PC-3 (cell line): ENCODE measurements at regions of chr5 and their contacts with region 1.

Region 1: DNA sequence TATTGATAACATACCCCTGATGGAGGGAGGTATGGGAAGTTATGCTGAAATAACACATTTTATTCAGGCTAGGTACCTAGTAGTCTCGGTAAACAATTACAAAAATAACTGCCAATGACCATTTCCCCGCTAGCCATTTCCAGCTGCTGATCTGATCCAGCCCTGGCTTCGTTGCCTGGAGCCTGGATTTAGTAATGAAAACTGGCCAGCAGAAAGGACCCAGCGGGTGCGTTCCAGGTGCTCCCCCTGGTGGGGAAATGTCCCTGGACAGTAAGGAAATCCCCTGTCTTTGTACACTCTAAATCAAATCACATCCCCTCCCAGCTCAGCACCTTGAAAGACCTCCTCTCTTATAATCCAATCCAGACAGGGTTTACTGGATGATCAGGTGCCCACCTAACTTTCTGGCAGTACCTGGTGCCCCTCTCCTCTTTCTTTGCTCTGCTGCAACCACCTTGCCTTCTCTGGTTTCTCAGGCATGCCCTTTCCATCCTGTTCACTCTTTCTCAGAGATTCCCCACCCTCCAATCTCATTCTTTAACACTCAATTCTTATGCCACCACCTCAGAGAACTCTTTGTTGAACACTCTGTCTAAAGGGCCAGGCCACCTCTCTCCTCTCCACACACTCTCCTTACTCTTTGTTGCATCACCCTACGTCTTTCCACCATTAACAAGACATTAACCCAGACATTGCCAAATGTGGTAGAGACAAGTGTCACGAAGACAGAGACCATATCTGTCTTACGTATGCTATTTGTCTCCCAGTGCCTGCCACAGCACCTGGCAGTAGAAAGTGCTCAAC is 50.1 kb upstream of the SMAD5 start:
- DNase-seq: peak; percentile 71
- ATAC-seq: peak; percentile 89
- H3K4me3 ChIP-seq: no peak overlapping the region
- H3K27ac ChIP-seq: no peak overlapping the region
- H3K4me1 ChIP-seq: no peaks in the 10 kb centered on the region
- H3K27me3 ChIP-seq: peaks cover 6% of the 10 kb centered on the region; the same call in 1 of the 2 replicates
- CTCF ChIP-seq: peak; percentile 76

Region 2: GRCh38 chr5:135615581-135616260 is 466.9 kb before region 1 on chr5:
- CTCF ChIA-PET with region 1: no interaction called
- POLR2A ChIA-PET with region 1: no interaction called
- intact Hi-C with region 1: no loop called
- DNase-seq: no peak
- ATAC-seq: no peak
- H3K4me3 ChIP-seq: no peak overlapping the region
- H3K27ac ChIP-seq: no peak overlapping the region
- H3K4me1 ChIP-seq: no peaks in the 10 kb centered on the region
- H3K27me3 ChIP-seq: peaks cover 16% of the 10 kb centered on the region
- CTCF ChIP-seq: no peak

Region 3: GRCh38 chr5:135887351-135887864 is 195.2 kb before region 1 on chr5:
- CTCF ChIA-PET with region 1: no interaction called
- POLR2A ChIA-PET with region 1: no interaction called
- intact Hi-C with region 1: loop called (anchors 1 kb)
- DNase-seq: peak; percentile 80
- ATAC-seq: peak; percentile 99
- H3K4me3 ChIP-seq: no peak overlapping the region
- H3K27ac ChIP-seq: no peak overlapping the region
- H3K4me1 ChIP-seq: peaks cover 5% of the 10 kb centered on the region; the same call in 1 of the 2 replicates
- H3K27me3 ChIP-seq: no peaks in the 10 kb centered on the region
- CTCF ChIP-seq: peak; percentile 79

Region 4: GRCh38 chr5:135944967-135945560 is 137.5 kb before region 1 on chr5:
- CTCF ChIA-PET with region 1: no interaction called
- POLR2A ChIA-PET with region 1: no interaction called
- intact Hi-C with region 1: loop called (anchors 1 kb)
- DNase-seq: peak; percentile 80
- ATAC-seq: peak; percentile 46
- H3K4me3 ChIP-seq: no peak overlapping the region
- H3K27ac ChIP-seq: no peak overlapping the region
- H3K4me1 ChIP-seq: no peaks in the 10 kb centered on the region
- H3K27me3 ChIP-seq: no peaks in the 10 kb centered on the region
- CTCF ChIP-seq: peak; percentile 80

Region 5: GRCh38 chr5:136174021-136174659 is 91.5 kb after region 1 on chr5:
- CTCF ChIA-PET with region 1: no interaction called
- POLR2A ChIA-PET with region 1: no interaction called
- intact Hi-C with region 1: loop called (anchors 1 kb)
- DNase-seq: peak; percentile 50
- ATAC-seq: peak; percentile 79
- H3K4me3 ChIP-seq: no peak overlapping the region
- H3K27ac ChIP-seq: no peak overlapping the region
- H3K4me1 ChIP-seq: no peaks in the 10 kb centered on the region
- H3K27me3 ChIP-seq: no peaks in the 10 kb centered on the region
- CTCF ChIP-seq: peak; percentile 75